Kidney (tissue), 22 donors: ENCODE measurements at regions of chr11 and their contacts with region 1.

Region 1: GRCh38 chr11:114060392-114061350 is 1.2 kb downstream of the ZBTB16 start:
- DNase-seq: peak; percentile 44 to 85 (median 67)
- H3K4me3 ChIP-seq: peak overlapping the region; percentile 51 to 90 (median 81)
- H3K27ac ChIP-seq: peak overlapping the region; percentile 89 to 92
- H3K4me1 ChIP-seq: peaks cover 0 to 21% (median 0%) of the 10 kb centered on the region in 3 donors
- H3K27me3 ChIP-seq: peaks cover 15% of the 10 kb centered on the region
- CTCF ChIP-seq: no peak

Region 2: GRCh38 chr11:114159802-114160632 is 99.3 kb after region 1 on chr11:
- intact Hi-C with region 1: loop called (anchors 10 kb)
- DNase-seq: peak; percentile 96 to 99 (median 98)
- H3K4me3 ChIP-seq: peak overlapping the region in 2 of 3 donors; percentile 29 to 39
- H3K27ac ChIP-seq: peak overlapping the region; percentile 83 to 94
- H3K4me1 ChIP-seq: peaks cover 0 to 74% (median 63%) of the 10 kb centered on the region in 3 donors
- H3K27me3 ChIP-seq: no peaks in the 10 kb centered on the region
- CTCF ChIP-seq: no peak